ENCODE measurements at regions of chr4 and their contacts with region 1.

Region 1: DNA sequence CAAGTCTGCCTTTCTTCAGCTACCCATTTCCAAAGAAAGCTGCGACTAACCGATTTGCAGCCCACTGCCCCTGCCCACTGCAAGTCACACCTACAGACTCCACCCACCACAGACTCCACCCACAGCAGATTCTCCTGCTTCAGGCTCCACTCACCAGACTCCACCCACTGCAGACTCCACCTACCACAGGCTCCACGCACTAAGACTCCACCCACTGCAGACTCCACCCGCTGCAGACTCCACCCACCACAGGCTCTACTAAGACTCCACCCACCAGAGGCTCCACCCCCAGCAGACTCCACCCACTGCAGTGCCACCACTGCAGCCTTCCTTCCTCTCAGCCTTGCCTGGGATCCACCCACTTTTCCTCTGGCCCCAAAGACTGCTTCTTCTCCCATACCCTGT is 41.3 kb downstream of the ABLIM2 start:
- DNase-seq: peak; percentile 84 to 96
- ATAC-seq: peak; percentile 70 to 83 (median 76)
- H3K4me3 ChIP-seq: peak overlapping the region; percentile 21
- H3K27ac ChIP-seq: peak overlapping the region; percentile 98
- H3K4me1 ChIP-seq: peaks cover 95% of the 10 kb centered on the region
- H3K27me3 ChIP-seq: no peaks in the 10 kb centered on the region
- CTCF ChIP-seq: no peak

Region 2: GRCh38 chr4:7638984-7639789 is 478.1 kb before region 1 on chr4:
- intact Hi-C with region 1: no loop called
- DNase-seq: no peak
- ATAC-seq: no peak
- H3K4me3 ChIP-seq: no peak overlapping the region
- H3K27ac ChIP-seq: no peak overlapping the region
- H3K4me1 ChIP-seq: no peaks in the 10 kb centered on the region
- H3K27me3 ChIP-seq: peaks cover 0 to 22% (median 2%) of the 10 kb centered on the region in 3 donors
- CTCF ChIP-seq: no peak

Region 3: DNA sequence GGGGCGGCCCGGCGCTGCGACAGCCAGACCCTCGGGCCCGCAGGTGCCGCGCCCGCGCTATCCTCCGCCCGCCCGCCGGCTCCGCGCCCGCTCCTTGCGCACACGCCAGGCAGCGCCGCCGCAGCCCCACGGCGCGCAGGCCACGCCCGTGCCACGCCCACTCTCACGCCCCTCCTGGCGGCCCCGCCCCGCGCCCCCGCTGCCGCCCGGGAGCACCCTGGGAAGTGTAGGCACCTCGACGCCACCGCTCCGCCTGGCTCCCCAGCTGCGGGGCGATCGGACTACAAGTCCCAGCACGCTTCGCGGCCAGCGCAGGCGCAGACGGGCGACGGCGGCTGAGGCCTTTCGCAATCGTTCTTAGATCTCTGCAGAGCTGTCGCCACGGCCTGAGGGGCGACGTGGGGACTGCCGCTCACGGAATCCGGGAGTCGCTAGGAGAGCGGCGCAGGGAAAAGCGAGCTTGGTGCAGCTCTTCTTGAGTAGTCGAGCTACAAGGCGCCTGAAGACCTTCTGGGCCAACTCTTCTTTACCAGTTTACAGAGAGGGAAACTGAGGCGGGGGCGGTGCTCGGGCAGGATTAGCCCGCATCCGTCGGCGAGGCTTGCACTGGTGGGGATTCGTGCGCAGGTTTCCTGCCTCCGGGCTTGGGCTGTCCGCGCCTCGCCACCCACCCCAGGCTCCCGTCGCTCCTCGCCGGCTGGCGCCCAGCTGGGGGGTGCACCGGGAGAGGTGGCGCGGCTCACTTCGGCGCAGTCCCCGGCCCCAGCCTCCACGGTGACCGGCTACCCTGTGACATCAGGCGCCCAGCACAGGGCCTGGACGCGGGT is 41.6 kb after region 1 on chr4 and contains the start of gene ABLIM2:
- intact Hi-C with region 1: loop called (anchors 5 kb)
- DNase-seq: peak; percentile 98 to 99
- ATAC-seq: peak; percentile 76 to 92 (median 82)
- H3K4me3 ChIP-seq: peak within 1 kb of the TSS; percentile 87
- H3K27ac ChIP-seq: peak within 1 kb of the TSS; percentile 85
- H3K4me1 ChIP-seq: peaks cover 45% of the 10 kb centered on the region
- H3K27me3 ChIP-seq: no peaks in the 10 kb centered on the region
- CTCF ChIP-seq: no peak
- total RNA-seq, gene ABLIM2: 127 to 956 (median 461) TPM

Region 4: GRCh38 chr4:8537041-8537552 is 419.8 kb after region 1 on chr4:
- intact Hi-C with region 1: no loop called
- DNase-seq: peak; percentile 30 to 56
- ATAC-seq: peak; percentile 46 to 74 (median 70)
- H3K4me3 ChIP-seq: no peak overlapping the region
- H3K27ac ChIP-seq: no peak overlapping the region
- H3K4me1 ChIP-seq: no peaks in the 10 kb centered on the region
- H3K27me3 ChIP-seq: peaks cover 0 to 13% (median 0%) of the 10 kb centered on the region in 3 donors
- CTCF ChIP-seq: no peak